ENCODE measurements at regions of chr6 and their contacts with region 1.

Region 1: GRCh38 chr6:33620856-33621710 is at the start of gene ITPR3:
- DNase-seq: peak; percentile 84
- H3K4me3 Mint-ChIP-seq: peak within 1 kb of the TSS; percentile 94
- H3K27ac Mint-ChIP-seq: peak within 1 kb of the TSS; percentile 93
- H3K4me1 Mint-ChIP-seq: peaks cover 58% of the 10 kb centered on the region
- H3K27me3 Mint-ChIP-seq: no peaks in the 10 kb centered on the region
- total RNA-seq, gene ITPR3: 54.2 to 55.1 TPM

Region 2: GRCh38 chr6:33372526-33373123 is 248.5 kb before region 1 on chr6:
- CTCF ChIA-PET with region 1: no interaction called
- POLR2A ChIA-PET with region 1: no interaction called
- DNase-seq: no peak
- H3K4me3 Mint-ChIP-seq: no peak overlapping the region
- H3K27ac Mint-ChIP-seq: no peak overlapping the region
- H3K4me1 Mint-ChIP-seq: peaks cover 33% of the 10 kb centered on the region
- H3K27me3 Mint-ChIP-seq: no peaks in the 10 kb centered on the region

Region 3: DNA sequence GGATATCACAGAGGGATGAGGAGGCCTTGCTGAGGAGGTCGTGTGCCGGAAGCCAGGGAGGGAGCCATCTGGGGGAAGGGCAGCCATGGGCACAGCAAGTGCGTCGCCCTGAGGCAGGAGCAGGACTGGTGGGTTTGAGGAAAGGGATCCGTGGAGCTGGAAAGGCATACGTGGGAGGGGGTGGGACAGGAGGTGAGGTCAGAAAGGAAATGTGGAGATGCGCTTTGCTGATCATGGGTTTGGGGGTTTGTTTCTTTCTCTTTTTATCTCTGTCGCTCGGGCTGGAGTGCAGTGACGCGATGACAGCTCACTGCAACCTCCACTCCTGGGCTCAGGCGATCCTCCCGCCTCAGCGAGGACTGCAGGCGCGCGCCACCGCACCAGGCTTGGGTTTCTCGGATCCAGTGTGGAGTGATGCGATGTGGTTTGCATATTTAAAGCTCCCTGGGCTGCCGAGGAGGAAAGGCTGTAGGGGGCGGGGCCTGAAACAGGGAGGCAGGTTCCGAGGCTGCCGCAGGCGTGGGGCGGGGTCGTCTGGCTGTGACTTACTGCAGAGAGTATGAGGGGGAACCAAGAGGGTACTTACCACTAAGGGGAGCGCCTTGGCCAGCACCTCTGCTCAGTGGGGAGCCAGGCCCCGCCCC is 28.6 kb before region 1 on chr6:
- CTCF ChIA-PET with region 1: interaction called, 9 read pairs
- POLR2A ChIA-PET with region 1: interaction called, 10 read pairs
- DNase-seq: peak; percentile 50
- H3K4me3 Mint-ChIP-seq: peak overlapping the region; percentile 68
- H3K27ac Mint-ChIP-seq: no peak overlapping the region
- H3K4me1 Mint-ChIP-seq: peaks cover 50% of the 10 kb centered on the region
- H3K27me3 Mint-ChIP-seq: peaks cover 2% of the 10 kb centered on the region

Region 4: GRCh38 chr6:33607784-33608161 is 13.3 kb before region 1 on chr6:
- CTCF ChIA-PET with region 1: interaction called, 20 read pairs
- POLR2A ChIA-PET with region 1: interaction called, 29 read pairs
- DNase-seq: peak; percentile 67
- H3K4me3 Mint-ChIP-seq: no peak overlapping the region
- H3K27ac Mint-ChIP-seq: no peak overlapping the region
- H3K4me1 Mint-ChIP-seq: peaks cover 6% of the 10 kb centered on the region
- H3K27me3 Mint-ChIP-seq: peaks cover 16% of the 10 kb centered on the region

Region 5: DNA sequence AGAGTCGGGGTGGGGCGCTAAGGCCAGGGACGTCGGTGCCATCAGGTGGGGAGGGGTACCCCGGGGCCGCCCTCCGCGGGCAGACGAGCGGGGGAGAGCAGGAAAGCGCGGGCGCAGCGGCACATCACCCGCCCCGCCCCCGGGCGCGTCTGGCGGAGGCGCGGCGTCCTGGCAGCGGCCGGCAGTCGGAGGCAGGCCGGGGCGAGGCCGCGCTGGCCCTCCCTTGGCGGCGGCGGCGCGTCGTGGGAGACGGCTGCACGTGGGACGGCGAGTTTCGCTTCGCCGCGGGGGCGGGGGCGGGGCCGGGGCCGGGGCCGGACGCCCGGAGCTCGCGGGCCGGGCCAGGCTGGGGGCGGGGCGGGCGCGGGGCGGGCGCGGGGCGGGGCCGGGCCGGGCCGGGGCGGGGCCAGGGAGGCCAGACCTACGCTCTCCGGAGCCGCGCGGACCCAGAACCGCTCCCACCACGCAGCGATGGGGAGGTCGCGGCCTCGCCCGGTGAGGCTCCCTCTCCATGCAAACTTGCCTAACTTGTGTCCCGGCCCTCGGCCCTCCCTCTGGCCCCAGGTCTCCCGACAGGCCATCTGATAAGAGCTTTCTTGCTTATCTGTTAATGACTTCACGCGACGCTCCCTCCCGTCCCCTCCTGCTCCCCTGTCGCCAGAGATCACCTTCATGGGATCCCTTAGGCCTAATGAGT is 12.5 kb after region 1 on chr6:
- CTCF ChIA-PET with region 1: interaction called, 7 read pairs
- POLR2A ChIA-PET with region 1: interaction called, 26 read pairs
- DNase-seq: peak; percentile 70
- H3K4me3 Mint-ChIP-seq: peak overlapping the region; percentile 63
- H3K27ac Mint-ChIP-seq: no peak overlapping the region
- H3K4me1 Mint-ChIP-seq: peaks cover 75% of the 10 kb centered on the region
- H3K27me3 Mint-ChIP-seq: no peaks in the 10 kb centered on the region

Region 6: DNA sequence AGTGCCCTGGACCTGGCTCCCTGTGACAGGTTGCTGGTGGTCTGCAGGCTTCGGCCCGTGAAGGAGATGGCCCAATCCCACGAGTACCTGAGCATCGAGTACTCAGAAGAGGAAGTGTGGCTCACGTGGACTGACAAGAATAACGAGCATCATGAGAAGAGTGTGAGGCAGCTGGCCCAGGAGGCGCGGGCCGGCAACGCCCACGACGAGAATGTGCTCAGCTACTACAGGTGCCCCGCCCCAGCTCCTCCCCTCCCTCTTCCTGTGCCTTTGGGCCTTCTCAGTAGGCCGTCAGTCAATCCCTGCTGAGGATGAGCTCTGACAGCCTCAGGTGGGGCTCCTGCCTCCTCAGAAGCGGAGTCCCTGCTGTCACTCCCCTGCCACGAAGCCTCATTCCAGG is 47.8 kb after region 1 on chr6:
- CTCF ChIA-PET with region 1: no interaction called
- POLR2A ChIA-PET with region 1: interaction called, 13 read pairs
- DNase-seq: peak; percentile 84
- H3K4me3 Mint-ChIP-seq: no peak overlapping the region
- H3K27ac Mint-ChIP-seq: peak overlapping the region; percentile 90
- H3K4me1 Mint-ChIP-seq: peaks cover 21% of the 10 kb centered on the region
- H3K27me3 Mint-ChIP-seq: no peaks in the 10 kb centered on the region

Region 7: GRCh38 chr6:33700391-33701050 is 79.4 kb after region 1 on chr6:
- CTCF ChIA-PET with region 1: interaction called, 10 read pairs
- POLR2A ChIA-PET with region 1: interaction called, 25 read pairs
- DNase-seq: peak; percentile 84
- H3K4me3 Mint-ChIP-seq: no peak overlapping the region
- H3K27ac Mint-ChIP-seq: peak overlapping the region; percentile 58
- H3K4me1 Mint-ChIP-seq: peaks cover 55% of the 10 kb centered on the region
- H3K27me3 Mint-ChIP-seq: no peaks in the 10 kb centered on the region

Region 8: GRCh38 chr6:33794891-33795623 is 174.0 kb after region 1 on chr6:
- CTCF ChIA-PET with region 1: no interaction called
- POLR2A ChIA-PET with region 1: no interaction called
- DNase-seq: no peak
- H3K4me3 Mint-ChIP-seq: no peak overlapping the region
- H3K27ac Mint-ChIP-seq: no peak overlapping the region
- H3K4me1 Mint-ChIP-seq: peaks cover 4% of the 10 kb centered on the region
- H3K27me3 Mint-ChIP-seq: peaks cover 49% of the 10 kb centered on the region

Measured in activated CD4-positive, alpha-beta memory T cell treated with anti-CD3 and anti-CD28 coated beads, Interleukin-2, amount 10 ng/mL, durations not matched to agents 7 days and 5 days (primary cell).